Caco-2 (cell line): ENCODE measurements at regions of chr3 and their contacts with region 1.

Region 1: GRCh38 chr3:120348981-120349818 is at the start of gene LRRC58:
- DNase-seq: peak; percentile 87 to 91
- H3K4me3 ChIP-seq: peak within 1 kb of the TSS; percentile 94
- H3K4me3 Mint-ChIP-seq: peak within 1 kb of the TSS; percentile 82
- H3K27ac Mint-ChIP-seq: peak within 1 kb of the TSS; percentile 87
- H3K4me1 ChIP-seq: peaks cover 8% of the 10 kb centered on the region
- H3K4me1 Mint-ChIP-seq: peaks cover 21% of the 10 kb centered on the region
- H3K27me3 ChIP-seq: no peaks in the 10 kb centered on the region; the same call in 1 of the 2 replicates
- H3K27me3 Mint-ChIP-seq: no peaks in the 10 kb centered on the region
- CTCF ChIP-seq: peak in 1 of 2 experiments; percentile 8
- total RNA-seq, gene LRRC58: 19.8 and 20.5 TPM in 2 replicates

Region 2: GRCh38 chr3:120052225-120052624 is 297.0 kb before region 1 on chr3:
- CTCF ChIA-PET with region 1: no interaction called
- POLR2A ChIA-PET with region 1: no interaction called
- intact Hi-C with region 1: no loop called
- DNase-seq: no peak
- H3K4me3 ChIP-seq: no peak overlapping the region
- H3K4me3 Mint-ChIP-seq: no peak overlapping the region
- H3K27ac Mint-ChIP-seq: no peak overlapping the region
- H3K4me1 ChIP-seq: no peaks in the 10 kb centered on the region
- H3K4me1 Mint-ChIP-seq: peaks cover 12% of the 10 kb centered on the region
- H3K27me3 ChIP-seq: no peaks in the 10 kb centered on the region
- H3K27me3 Mint-ChIP-seq: no peaks in the 10 kb centered on the region
- CTCF ChIP-seq: no peak

Region 3: DNA sequence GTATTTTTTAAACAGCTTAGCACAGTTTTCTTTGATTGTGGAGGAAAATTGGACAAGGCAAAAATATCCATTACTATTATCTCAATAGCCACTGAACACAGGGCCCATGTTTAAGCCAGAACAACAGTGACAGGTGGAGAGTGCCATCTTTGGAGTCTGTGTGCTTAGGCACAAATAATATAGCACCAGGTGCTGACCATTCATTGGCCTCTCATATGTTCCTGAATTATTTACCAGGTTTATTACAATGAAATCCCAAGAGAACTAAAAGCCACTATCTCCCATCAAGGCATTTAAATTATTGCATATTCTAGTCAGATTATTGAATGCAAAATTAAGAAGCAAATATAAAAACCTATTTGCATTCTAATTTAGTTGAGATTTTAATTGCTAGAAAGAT is 103.8 kb before region 1 on chr3:
- CTCF ChIA-PET with region 1: interaction called, 6 read pairs
- POLR2A ChIA-PET with region 1: no interaction called
- intact Hi-C with region 1: loop called (anchors 1 kb)
- DNase-seq: no peak
- H3K4me3 ChIP-seq: no peak overlapping the region
- H3K4me3 Mint-ChIP-seq: no peak overlapping the region
- H3K27ac Mint-ChIP-seq: no peak overlapping the region
- H3K4me1 ChIP-seq: no peaks in the 10 kb centered on the region
- H3K4me1 Mint-ChIP-seq: no peaks in the 10 kb centered on the region
- H3K27me3 ChIP-seq: no peaks in the 10 kb centered on the region
- H3K27me3 Mint-ChIP-seq: no peaks in the 10 kb centered on the region
- CTCF ChIP-seq: no peak

Region 4: GRCh38 chr3:120284747-120285507 is 64.3 kb before region 1 on chr3 and contains the start of gene GPR156:
- CTCF ChIA-PET with region 1: no interaction called
- POLR2A ChIA-PET with region 1: no interaction called
- intact Hi-C with region 1: loop called (anchors 5 kb)
- DNase-seq: peak; percentile 42 to 64
- H3K4me3 ChIP-seq: peak within 1 kb of the TSS; percentile 57
- H3K4me3 Mint-ChIP-seq: peak within 1 kb of the TSS; percentile 77
- H3K27ac Mint-ChIP-seq: no peak within 1 kb of the TSS
- H3K4me1 ChIP-seq: 0 out of 2 replicates have a peak, but pooled peaks cover 5% of the 10 kb centered on the region
- H3K4me1 Mint-ChIP-seq: no peaks in the 10 kb centered on the region
- H3K27me3 ChIP-seq: no peaks in the 10 kb centered on the region
- H3K27me3 Mint-ChIP-seq: peaks cover 2% of the 10 kb centered on the region
- CTCF ChIP-seq: no peak
- total RNA-seq, gene GPR156: 1.7 and 3.1 TPM in 2 replicates